ENCODE measurements at regions of chrX and their contacts with region 1.

Region 1: GRCh38 chrX:155056877-155057792 is 13.8 kb downstream of the CMC4 start:
- DNase-seq: peak; percentile 82

Region 2: DNA sequence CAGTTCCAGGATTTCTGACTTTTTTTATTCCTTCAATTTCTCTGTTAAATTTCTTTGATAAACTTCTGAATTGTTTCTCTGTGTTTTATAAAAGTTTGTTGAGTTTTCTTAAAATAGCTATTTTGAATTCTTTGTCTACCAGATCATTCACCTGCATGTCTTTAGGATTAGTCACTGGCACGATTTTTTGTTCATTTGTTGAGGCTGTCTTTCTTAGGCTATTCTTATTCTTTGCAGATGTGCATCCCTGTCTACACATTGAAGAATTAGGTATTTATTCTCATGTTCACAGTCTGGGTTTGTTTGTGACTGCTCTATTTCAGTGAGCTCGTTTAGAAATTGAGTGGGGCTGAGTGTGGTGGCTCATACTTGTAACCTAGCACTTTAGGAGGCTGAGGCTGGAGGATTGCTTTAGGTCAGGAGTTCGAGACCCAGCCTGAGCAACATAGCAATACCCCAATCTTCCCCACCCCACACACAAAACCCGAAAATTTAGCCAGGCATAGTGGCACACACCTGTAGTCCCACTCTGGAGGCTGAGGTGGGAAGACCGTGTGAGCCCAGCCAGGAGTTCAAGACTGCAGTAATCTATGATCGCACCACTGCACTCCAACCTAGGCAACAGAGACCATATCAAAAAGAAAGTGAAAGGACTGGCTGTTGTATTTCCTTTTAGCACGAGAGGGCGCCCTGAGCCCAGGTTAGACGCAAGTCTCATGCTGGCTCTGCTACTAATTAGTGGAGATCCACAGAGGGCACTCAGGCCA is 76.6 kb before region 1 on chrX:
- intact Hi-C with region 1: loop called (anchors 2 kb)
- DNase-seq: no peak

Region 3: GRCh38 chrX:155094468-155095061 is 37.4 kb after region 1 on chrX:
- intact Hi-C with region 1: no loop called
- DNase-seq: no peak

Region 4: DNA sequence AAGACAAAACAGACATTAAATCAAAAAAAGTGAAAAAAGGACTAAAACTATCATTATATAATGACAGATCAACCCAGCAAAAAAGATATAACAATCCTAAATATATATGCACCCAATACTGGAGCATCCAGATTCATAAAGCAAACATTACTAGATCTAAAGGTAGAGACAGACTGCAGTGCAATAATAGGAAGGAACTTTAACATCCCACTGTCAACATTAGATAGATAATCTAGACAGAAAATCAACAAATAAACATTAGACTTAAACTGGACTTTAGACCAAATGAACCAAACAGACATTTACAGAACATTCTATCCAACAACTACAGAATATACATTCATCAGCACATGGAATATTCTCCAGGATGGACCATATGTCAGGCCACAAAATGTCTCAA is 236.6 kb after region 1 on chrX:
- intact Hi-C with region 1: no loop called
- DNase-seq: no peak

Measured in cardiac septum (tissue), 1 donor.